Colonic mucosa (tissue), 4 donors: ENCODE measurements at regions of chr16 and their contacts with region 1.

Region 1: GRCh38 chr16:84726079-84726668 is 26.4 kb downstream of the USP10 start:
- DNase-seq: peak; percentile 96
- H3K4me3 ChIP-seq: no peak overlapping the region
- H3K27ac ChIP-seq: peak overlapping the region; percentile 74
- H3K4me1 ChIP-seq: peaks cover 17% of the 10 kb centered on the region
- H3K27me3 ChIP-seq: no peaks in the 10 kb centered on the region
- CTCF ChIP-seq: peak; percentile 94

Region 2: DNA sequence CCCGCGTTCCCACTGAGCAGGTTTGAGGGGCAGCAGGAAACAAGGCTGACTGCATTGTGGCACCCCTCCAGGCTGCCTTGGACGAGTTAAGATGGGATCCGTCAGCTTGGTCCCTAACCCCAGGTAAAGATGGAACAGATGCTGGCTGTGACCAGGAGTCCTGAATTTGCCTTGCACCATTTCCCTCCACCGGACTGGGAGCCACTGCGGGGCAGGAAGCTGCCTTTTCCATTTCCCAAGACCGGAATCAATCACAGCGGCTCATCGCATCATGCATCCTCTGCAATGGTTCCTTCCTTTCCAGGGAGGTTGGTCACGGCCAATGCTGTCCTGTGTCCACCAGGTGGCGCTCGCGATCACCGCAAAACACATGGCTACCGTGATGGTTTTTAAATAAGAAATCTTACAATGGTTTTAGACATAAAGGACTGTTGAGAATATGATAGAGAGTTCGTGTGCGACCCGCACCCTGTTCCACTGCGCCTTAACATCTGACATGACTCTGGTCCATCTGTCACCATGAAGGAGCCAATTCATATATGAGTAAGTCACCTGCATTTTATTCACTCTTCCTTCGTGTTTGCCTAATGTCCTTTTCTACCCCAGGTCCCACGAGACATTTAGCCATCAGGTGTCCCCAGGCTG is 214.9 kb before region 1 on chr16:
- intact Hi-C with region 1: loop called (anchors 5 kb)
- DNase-seq: peak; percentile 89
- H3K4me3 ChIP-seq: no peak overlapping the region
- H3K27ac ChIP-seq: no peak overlapping the region
- H3K4me1 ChIP-seq: no peaks in the 10 kb centered on the region
- H3K27me3 ChIP-seq: no peaks in the 10 kb centered on the region
- CTCF ChIP-seq: peak; percentile 96

Region 3: DNA sequence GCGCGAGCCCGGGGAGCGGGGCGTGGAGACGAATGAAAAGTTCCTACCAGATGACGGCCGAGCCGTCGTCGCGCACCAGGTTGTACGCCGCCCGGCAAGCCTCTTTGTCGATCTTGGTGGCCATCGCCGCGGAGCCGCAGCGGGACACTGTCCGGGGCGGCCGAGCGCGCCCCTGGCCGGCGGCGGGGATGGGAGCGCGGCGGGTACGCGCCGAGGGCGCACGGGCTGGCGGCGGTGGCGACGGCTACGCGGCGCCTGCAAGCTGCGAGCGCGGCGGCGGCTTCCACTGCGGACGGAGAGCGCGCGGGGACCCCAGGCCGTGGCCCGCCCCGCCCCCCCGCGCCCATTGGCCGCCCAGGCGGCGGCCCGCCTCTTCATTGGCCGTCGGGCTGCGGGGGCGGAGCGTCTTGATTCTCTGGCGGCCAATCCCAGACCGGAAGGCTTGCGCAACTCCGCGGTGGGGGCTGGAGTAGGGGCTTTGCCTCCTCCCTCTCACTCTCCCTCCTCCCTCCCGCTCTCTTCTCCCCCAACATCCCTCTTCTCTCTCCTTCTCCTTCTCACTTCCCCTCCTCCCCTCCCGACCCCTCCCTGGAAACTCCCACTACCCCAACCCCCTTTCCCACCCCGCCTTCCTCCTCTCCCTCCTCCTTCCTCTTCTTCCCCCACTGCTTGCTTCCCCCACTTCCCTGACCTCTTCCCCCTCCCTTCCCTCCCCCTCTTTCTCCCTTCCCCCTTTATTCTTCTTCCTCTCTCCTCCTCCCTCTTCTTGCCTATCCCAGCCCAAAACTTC is 108.2 kb before region 1 on chr16 and contains the start of gene COTL1:
- intact Hi-C with region 1: loop called (anchors 5 kb)
- DNase-seq: peak; percentile 97
- H3K4me3 ChIP-seq: peak within 1 kb of the TSS; percentile 84
- H3K27ac ChIP-seq: peak within 1 kb of the TSS; percentile 74
- H3K4me1 ChIP-seq: peaks cover 8% of the 10 kb centered on the region
- H3K27me3 ChIP-seq: no peaks in the 10 kb centered on the region
- CTCF ChIP-seq: no peak
- total RNA-seq, gene COTL1: 79.1 to 138 TPM

Region 4: GRCh38 chr16:84672276-84673202 is 53.6 kb before region 1 on chr16:
- intact Hi-C with region 1: loop called (anchors 2 kb)
- DNase-seq: peak; percentile 82
- H3K4me3 ChIP-seq: no peak overlapping the region
- H3K27ac ChIP-seq: no peak overlapping the region
- H3K4me1 ChIP-seq: no peaks in the 10 kb centered on the region
- H3K27me3 ChIP-seq: no peaks in the 10 kb centered on the region
- CTCF ChIP-seq: peak; percentile 92

Region 5: GRCh38 chr16:84795329-84796053 is 69.3 kb after region 1 on chr16:
- intact Hi-C with region 1: no loop called
- DNase-seq: peak; percentile 56
- H3K4me3 ChIP-seq: no peak overlapping the region
- H3K27ac ChIP-seq: peak overlapping the region; percentile 50
- H3K4me1 ChIP-seq: no peaks in the 10 kb centered on the region
- H3K27me3 ChIP-seq: no peaks in the 10 kb centered on the region
- CTCF ChIP-seq: no peak